ENCODE measurements at regions of chr20 and their contacts with region 1.

Region 1: GRCh38 chr20:19205977-19206396 is 6.5 kb upstream of the SLC24A3 start:
- DNase-seq: peak; percentile 80
- H3K4me3 ChIP-seq: no peak overlapping the region
- H3K27ac ChIP-seq: no peak overlapping the region
- H3K4me1 ChIP-seq: peaks cover 0 to 6% (median 4%) of the 10 kb centered on the region in 4 donors
- H3K27me3 ChIP-seq: peaks cover 3% of the 10 kb centered on the region
- CTCF ChIP-seq: peak; percentile 80 to 88 (median 85)
- EP300 ChIP-seq: no peak
- POLR2A ChIP-seq: no peak

Region 2: GRCh38 chr20:18287915-18288748 is 917.9 kb before region 1 on chr20 and contains the start of gene ZNF133:
- in situ Hi-C with region 1: no loop called
- intact Hi-C with region 1: no loop called
- DNase-seq: peak; percentile 98
- H3K4me3 ChIP-seq: peak within 1 kb of the TSS; percentile 63 to 80 (median 74)
- H3K27ac ChIP-seq: peak within 1 kb of the TSS; percentile 86 to 93 (median 90)
- H3K4me1 ChIP-seq: peaks cover 0 to 19% (median 12%) of the 10 kb centered on the region in 4 donors
- H3K27me3 ChIP-seq: no peaks in the 10 kb centered on the region
- CTCF ChIP-seq: no peak
- EP300 ChIP-seq: no peak
- POLR2A ChIP-seq: peak; percentile 76
- total RNA-seq, gene ZNF133: 12.7 to 24.3 (median 17.5) TPM

Region 3: DNA sequence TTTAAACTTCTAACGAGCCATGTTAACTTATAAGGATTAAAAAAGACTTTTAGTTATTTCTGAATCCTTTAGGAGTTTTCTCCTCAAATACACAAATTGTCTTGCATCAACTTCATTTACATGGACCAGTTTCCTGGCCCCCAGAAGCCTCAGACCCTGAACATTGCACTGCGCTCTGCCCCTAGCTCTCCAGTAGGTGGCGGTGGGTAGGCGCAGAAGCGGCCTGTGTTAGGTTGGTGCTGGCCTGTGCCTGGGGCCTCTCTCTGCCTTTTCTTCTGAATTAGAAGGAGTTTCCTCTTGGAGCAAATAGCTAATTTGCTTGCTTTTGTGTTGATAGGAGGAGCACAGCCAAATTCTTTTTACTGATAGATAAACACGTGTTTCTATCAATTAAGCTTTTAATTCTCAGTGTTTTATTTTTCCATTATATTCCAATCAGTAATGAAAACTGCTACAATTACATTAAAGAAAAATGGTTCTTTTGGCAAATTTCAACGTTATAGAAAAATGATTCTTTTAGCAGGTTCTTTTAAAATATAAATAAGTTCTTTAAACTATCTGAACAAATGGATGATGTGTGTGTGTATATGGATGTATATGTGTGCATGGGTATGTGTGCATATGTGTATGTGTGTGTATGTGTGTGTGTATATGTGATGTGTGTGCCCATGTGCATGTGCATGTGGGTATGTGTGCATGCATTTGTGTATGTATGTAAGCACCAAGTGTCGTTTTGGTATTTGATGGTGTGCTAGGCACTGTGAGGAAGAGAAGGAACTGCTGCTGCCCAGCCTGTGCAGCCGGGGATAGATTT is 573.6 kb before region 1 on chr20:
- in situ Hi-C with region 1: loop called in 2 of 4 experiments (anchors 25 kb)
- intact Hi-C with region 1: no loop called
- DNase-seq: peak; percentile 46
- H3K4me3 ChIP-seq: no peak overlapping the region
- H3K27ac ChIP-seq: no peak overlapping the region
- H3K4me1 ChIP-seq: no peaks in the 10 kb centered on the region
- H3K27me3 ChIP-seq: no peaks in the 10 kb centered on the region
- CTCF ChIP-seq: peak; percentile 83 to 88 (median 86)
- EP300 ChIP-seq: no peak
- POLR2A ChIP-seq: no peak

Region 4: GRCh38 chr20:18904624-18905023 is 301.4 kb before region 1 on chr20:
- in situ Hi-C with region 1: loop called in 1 of 4 experiments (anchors 25 kb)
- intact Hi-C with region 1: no loop called
- DNase-seq: peak; percentile 8
- H3K4me3 ChIP-seq: no peak overlapping the region
- H3K27ac ChIP-seq: no peak overlapping the region
- H3K4me1 ChIP-seq: no peaks in the 10 kb centered on the region
- H3K27me3 ChIP-seq: no peaks in the 10 kb centered on the region
- CTCF ChIP-seq: peak in 4 of 5 experiments; percentile 15 to 46 (median 28)
- EP300 ChIP-seq: no peak
- POLR2A ChIP-seq: no peak

Region 5: DNA sequence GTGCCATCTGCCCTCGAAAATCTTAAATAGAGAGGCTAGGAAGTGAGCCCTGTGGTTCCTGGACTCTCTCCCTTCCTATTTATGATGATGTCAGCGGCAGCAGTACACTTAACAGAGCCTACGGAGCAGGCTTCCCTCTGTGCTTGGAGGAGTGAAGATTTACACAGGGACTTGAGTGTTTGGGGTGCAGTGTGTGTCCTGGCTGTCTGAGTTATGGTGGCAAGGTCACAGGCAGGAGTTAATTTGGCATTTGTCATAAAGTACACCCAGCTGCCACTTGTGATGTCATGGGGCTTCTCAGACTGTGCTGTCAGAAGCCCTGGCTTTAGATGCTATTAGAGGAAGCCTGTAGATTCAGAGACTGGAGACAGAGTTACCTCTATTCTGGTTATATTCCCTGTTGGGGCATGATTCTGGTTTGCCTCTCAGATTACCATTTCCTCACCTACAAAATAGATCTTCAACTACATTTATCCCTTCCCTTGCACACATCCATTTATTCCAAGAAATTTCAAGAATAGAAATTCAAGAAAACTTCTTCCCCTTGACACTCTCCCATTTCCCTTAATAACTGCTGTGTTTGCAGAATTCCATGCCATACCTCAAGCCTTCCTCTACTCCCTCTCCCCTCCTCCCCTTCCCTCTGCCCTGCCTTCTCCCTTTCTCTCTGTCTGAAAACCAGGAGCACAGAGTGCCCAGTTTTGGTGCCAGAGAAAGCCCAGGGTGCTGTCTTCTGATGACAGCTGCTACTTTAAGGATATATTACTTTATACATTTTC is 78.6 kb after region 1 on chr20:
- in situ Hi-C with region 1: no loop called
- intact Hi-C with region 1: loop called (anchors 2 kb)
- DNase-seq: no peak
- H3K4me3 ChIP-seq: no peak overlapping the region
- H3K27ac ChIP-seq: peak overlapping the region in 3 of 4 donors; percentile 19 to 50 (median 28)
- H3K4me1 ChIP-seq: peaks cover 0 to 10% (median 3%) of the 10 kb centered on the region in 4 donors
- H3K27me3 ChIP-seq: no peaks in the 10 kb centered on the region
- CTCF ChIP-seq: no peak
- EP300 ChIP-seq: no peak
- POLR2A ChIP-seq: no peak

Region 6: GRCh38 chr20:19583532-19584175 is 377.7 kb after region 1 on chr20:
- in situ Hi-C with region 1: loop called (anchors 5 to 25 kb)
- intact Hi-C with region 1: loop called (anchors 5 kb)
- DNase-seq: peak; percentile 70
- H3K4me3 ChIP-seq: no peak overlapping the region
- H3K27ac ChIP-seq: no peak overlapping the region
- H3K4me1 ChIP-seq: no peaks in the 10 kb centered on the region
- H3K27me3 ChIP-seq: no peaks in the 10 kb centered on the region
- CTCF ChIP-seq: peak; percentile 68 to 84 (median 78)
- EP300 ChIP-seq: no peak
- POLR2A ChIP-seq: no peak

Region 7: DNA sequence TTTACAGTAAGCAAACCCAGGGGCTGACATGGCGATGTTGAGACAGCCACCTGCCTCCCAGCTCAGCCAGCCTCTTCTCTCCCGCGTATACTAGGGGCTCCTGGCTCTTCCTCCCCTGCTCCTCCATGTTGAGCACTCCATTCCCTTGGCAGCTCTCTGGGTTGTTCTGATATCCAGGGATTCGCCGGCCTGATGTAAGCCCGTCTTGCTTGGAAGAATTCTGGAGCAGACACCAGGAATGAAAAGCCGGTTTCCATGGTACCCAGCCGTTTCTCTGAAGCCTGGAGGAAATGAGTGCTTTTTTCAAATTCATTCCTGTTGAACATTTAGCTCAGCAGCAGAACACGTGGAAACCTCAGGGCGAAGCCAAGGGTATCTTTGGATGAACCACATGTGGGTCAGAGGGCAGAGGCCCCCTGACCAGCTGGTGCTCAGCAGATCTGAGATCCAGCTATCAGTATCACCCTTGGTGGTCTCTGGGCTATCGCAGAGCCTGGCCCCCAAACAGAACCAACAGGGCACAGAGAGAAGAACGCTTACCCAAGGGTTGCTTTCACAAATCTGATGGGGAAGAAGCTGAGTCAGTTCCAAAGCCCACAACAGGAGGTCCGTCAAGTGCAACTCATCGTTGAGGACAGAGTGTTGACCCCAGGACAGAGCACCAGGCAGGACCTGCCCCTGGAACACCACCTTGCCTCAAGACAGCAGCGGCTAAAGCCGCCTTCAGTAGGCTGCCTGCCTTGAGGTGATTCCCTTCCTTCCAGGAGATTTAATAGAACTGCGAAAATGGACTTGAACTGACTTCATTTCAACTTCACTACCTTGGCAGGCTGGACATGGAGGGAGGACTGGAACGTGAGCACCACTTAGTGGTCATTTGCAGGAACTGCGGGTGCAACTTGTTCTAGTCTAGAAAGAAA is 456.0 kb after region 1 on chr20:
- in situ Hi-C with region 1: loop called (anchors 10 to 25 kb)
- intact Hi-C with region 1: loop called (anchors 5 kb)
- DNase-seq: peak; percentile 69
- H3K4me3 ChIP-seq: no peak overlapping the region
- H3K27ac ChIP-seq: no peak overlapping the region
- H3K4me1 ChIP-seq: no peaks in the 10 kb centered on the region
- H3K27me3 ChIP-seq: no peaks in the 10 kb centered on the region
- CTCF ChIP-seq: peak; percentile 92 to 99 (median 98)
- EP300 ChIP-seq: no peak
- POLR2A ChIP-seq: no peak